Activated naive CD4-positive, alpha-beta T cell treated with anti-CD3 and anti-CD28 coated beads, Interleukin-2, amount 10 ng/mL, durations not matched to agents 7 days and 5 days (primary cell): ENCODE measurements at regions of chr1 and their contacts with region 1.

Region 1: DNA sequence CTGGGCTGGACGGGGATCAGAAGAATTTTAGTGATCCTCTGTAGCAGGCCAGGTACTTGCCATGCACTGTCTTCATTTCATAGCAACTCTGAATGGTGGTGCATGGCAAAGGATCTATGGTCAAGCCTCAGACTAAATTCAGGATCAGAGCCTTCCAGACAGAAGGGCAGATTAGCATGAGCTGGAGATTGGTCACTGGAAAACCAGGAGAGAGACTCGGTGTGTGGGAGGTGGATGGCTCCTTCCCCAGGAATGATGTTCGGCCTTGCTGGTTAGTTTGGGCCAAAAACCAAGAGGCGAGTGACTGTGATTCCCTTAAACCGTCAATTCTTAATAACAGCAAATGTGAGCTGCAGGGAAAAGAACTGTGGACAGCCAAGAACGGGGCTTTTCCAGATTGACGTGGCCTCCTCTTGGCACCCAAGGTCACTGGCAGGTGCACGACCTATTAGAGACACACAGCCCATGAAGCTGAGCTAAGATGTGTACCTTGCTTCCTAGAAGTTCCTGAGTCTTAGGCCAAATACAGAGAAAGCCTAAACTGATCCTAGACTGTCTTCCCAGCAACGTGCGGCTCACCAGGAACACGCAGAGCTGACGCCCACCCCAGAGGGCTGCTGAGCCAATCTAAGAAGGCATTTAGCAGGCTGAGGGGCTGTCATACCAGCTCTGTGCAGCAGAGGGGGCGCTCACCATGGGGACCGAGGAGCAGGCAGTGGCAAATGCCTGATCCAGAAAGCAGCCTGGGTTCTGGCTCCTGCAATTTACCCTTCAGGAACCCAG is 18.5 kb downstream of the ALDH4A1 start:
- DNase-seq: peak; percentile 83
- H3K4me3 Mint-ChIP-seq: no peak overlapping the region
- H3K27ac Mint-ChIP-seq: no peak overlapping the region
- H3K4me1 Mint-ChIP-seq: no peaks in the 10 kb centered on the region
- H3K27me3 Mint-ChIP-seq: no peaks in the 10 kb centered on the region

Region 2: DNA sequence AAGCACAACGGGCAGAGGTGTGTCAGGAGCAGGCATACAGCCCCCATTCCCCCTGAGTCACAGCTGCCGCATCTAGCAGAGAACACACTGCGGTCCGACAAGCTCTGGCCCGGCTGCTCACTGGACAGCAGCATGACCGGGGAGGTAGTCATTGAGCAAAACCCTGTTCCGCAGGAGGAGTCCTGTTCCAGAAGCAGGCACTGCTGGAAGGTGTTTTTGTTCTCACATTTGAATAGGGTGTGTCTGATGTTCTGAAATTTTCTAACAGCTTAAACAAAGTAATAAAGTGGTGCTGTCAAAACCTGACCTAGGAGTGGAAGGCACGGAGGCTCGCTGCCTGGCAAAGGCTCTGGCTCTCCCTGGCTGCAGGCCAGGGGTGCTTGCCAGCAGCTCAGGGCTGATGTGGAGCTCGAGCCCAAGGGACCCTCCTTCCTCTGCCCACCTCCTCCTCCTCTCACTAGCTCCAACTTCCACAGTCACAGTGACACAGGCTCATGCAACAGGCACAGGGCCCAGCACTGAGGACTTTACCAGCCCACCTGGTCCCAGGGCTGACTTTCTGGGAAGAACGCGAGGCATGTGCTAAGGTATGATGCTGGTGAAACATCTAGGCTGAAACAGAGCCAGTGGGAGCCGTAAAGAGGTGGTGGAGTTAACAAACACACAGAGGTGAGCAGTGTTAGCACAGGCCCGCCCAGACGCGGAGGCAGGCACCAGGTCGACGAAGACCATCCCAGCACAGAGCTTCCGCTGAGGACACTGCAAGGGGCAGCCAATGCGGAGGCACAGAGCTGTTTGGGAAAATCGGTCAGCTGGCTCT is 191.3 kb after region 1 on chr1:
- CTCF ChIA-PET with region 1: interaction called, 10 read pairs
- DNase-seq: no peak
- H3K4me3 Mint-ChIP-seq: peak overlapping the region; percentile 2
- H3K27ac Mint-ChIP-seq: peak overlapping the region; percentile 88
- H3K4me1 Mint-ChIP-seq: peaks cover 37% of the 10 kb centered on the region
- H3K27me3 Mint-ChIP-seq: peaks cover 19% of the 10 kb centered on the region

Region 3: GRCh38 chr1:19113697-19114092 is 229.9 kb after region 1 on chr1:
- CTCF ChIA-PET with region 1: interaction called, 14 read pairs
- DNase-seq: peak; percentile 72
- H3K4me3 Mint-ChIP-seq: no peak overlapping the region
- H3K27ac Mint-ChIP-seq: no peak overlapping the region
- H3K4me1 Mint-ChIP-seq: no peaks in the 10 kb centered on the region
- H3K27me3 Mint-ChIP-seq: no peaks in the 10 kb centered on the region